GM18951 (cell line): ENCODE measurements at regions of chrX and their contacts with region 1.

Region 1: GRCh38 chrX:115989686-115990085 is 180.9 kb upstream of the AGTR2 start:
- POLR2A ChIP-seq: no peak

Region 2: GRCh38 chrX:115679460-115679859 is 310.2 kb before region 1 on chrX:
- in situ Hi-C with region 1: no loop called
- POLR2A ChIP-seq: no peak

Region 3: GRCh38 chrX:116198810-116199209 is 209.1 kb after region 1 on chrX:
- in situ Hi-C with region 1: loop called (anchors 10 kb)
- POLR2A ChIP-seq: no peak

Region 4: DNA sequence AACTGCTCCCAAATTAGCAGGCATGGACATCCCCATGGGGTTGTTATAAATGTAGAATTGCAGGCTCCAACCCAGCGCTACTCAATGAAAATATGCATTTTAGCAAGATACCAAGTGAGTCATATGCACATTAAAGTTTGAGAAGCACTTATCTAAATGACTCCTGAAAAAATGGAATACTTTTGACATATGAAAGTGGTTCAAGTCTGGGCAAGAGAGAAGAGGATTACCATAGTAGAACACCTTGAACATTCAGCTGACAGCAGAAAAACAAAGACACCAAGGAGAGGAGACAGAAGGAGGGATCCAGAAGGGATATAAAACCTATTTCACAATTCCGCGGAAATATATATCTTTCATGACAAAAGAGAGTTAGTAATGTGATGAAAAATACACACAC is 536.3 kb after region 1 on chrX:
- in situ Hi-C with region 1: loop called (anchors 10 kb)
- POLR2A ChIP-seq: no peak